Mammary epithelial cell (primary cell): ENCODE measurements at regions of chr4 and their contacts with region 1.

Region 1: GRCh38 chr4:69167300-69167699 is 47.2 kb downstream of the UGT2B11 start:
- DNase-seq: peak; percentile 2
- H3K4me3 ChIP-seq: no peak overlapping the region
- H3K27ac ChIP-seq: no peak overlapping the region
- H3K4me1 ChIP-seq: no peaks in the 10 kb centered on the region
- H3K27me3 ChIP-seq: peaks cover 2% of the 10 kb centered on the region
- CTCF ChIP-seq: no peak

Region 2: DNA sequence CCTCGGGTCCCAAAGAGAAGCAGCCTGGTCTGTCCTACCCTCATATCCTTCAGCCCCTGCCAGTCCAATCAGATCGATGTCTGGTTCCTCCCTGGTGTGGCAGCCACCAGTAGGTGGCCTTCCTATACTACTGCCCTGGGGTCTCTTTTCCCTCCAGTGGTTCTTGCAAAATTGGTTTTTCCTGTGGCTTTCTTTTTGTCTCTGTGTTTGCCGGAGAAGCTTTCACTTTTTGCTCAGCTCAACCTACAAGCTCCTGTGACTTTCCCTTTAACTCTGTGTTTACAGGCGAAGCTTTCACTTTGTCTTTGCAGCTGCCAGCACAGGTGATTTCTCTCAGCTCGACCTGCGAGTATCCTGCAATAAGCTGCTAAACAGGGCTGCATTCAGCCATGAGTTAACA is 262.5 kb before region 1 on chr4:
- CTCF ChIA-PET with region 1: no interaction called
- dilution Hi-C with region 1: no loop called
- in situ Hi-C with region 1: no loop called
- intact Hi-C with region 1: loop called (anchors 10 kb)
- DNase-seq: peak; percentile 11
- H3K4me3 ChIP-seq: no peak overlapping the region
- H3K27ac ChIP-seq: no peak overlapping the region
- H3K4me1 ChIP-seq: peaks cover 7% of the 10 kb centered on the region
- H3K27me3 ChIP-seq: no peaks in the 10 kb centered on the region
- CTCF ChIP-seq: peak in 1 of 2 donors; percentile 36

Region 3: GRCh38 chr4:69060651-69061308 is 106.5 kb before region 1 on chr4:
- CTCF ChIA-PET with region 1: no interaction called
- dilution Hi-C with region 1: no loop called
- in situ Hi-C with region 1: no loop called
- intact Hi-C with region 1: loop called (anchors 2 kb)
- DNase-seq: no peak
- H3K4me3 ChIP-seq: no peak overlapping the region
- H3K27ac ChIP-seq: no peak overlapping the region
- H3K4me1 ChIP-seq: no peaks in the 10 kb centered on the region
- H3K27me3 ChIP-seq: no peaks in the 10 kb centered on the region
- CTCF ChIP-seq: peak in 1 of 2 donors; percentile 8